ENCODE measurements at regions of chr9 and their contacts with region 1.

Region 1: GRCh38 chr9:132957805-132958204 is 13.4 kb upstream of the TSC1 start:
- DNase-seq: no peak
- ATAC-seq: no peak
- H3K4me3 ChIP-seq: no peak overlapping the region
- H3K4me3 Mint-ChIP-seq: no peak overlapping the region
- H3K27ac ChIP-seq: no peak overlapping the region
- H3K27ac Mint-ChIP-seq: no peak overlapping the region
- H3K4me1 ChIP-seq: no peaks in the 10 kb centered on the region
- H3K4me1 Mint-ChIP-seq: no peaks in the 10 kb centered on the region
- H3K27me3 ChIP-seq: peaks cover 0 to 12% of the 10 kb centered on the region in 2 experiments
- H3K27me3 Mint-ChIP-seq: peaks cover 6 to 13% of the 10 kb centered on the region in 2 donors

Region 2: GRCh38 chr9:132752877-132753592 is 204.8 kb before region 1 on chr9:
- CTCF ChIA-PET with region 1: no interaction called
- POLR2A ChIA-PET with region 1: interaction called in 1 of 2 experiments, 11 read pairs
- DNase-seq: peak in 1 of 35 experiments; percentile 17
- ATAC-seq: no peak
- H3K4me3 ChIP-seq: no peak overlapping the region
- H3K4me3 Mint-ChIP-seq: no peak overlapping the region
- H3K27ac ChIP-seq: no peak overlapping the region
- H3K27ac Mint-ChIP-seq: no peak overlapping the region
- H3K4me1 ChIP-seq: no peaks in the 10 kb centered on the region
- H3K4me1 Mint-ChIP-seq: no peaks in the 10 kb centered on the region
- H3K27me3 ChIP-seq: peaks cover 0 to 12% of the 10 kb centered on the region in 2 experiments
- H3K27me3 Mint-ChIP-seq: peaks cover 3 to 6% of the 10 kb centered on the region in 2 donors